Activated CD4-positive, alpha-beta T cell treated with anti-CD3 and anti-CD28 coated beads for 36 hours (primary cell): ENCODE measurements at regions of chr3 and their contacts with region 1.

Region 1: DNA sequence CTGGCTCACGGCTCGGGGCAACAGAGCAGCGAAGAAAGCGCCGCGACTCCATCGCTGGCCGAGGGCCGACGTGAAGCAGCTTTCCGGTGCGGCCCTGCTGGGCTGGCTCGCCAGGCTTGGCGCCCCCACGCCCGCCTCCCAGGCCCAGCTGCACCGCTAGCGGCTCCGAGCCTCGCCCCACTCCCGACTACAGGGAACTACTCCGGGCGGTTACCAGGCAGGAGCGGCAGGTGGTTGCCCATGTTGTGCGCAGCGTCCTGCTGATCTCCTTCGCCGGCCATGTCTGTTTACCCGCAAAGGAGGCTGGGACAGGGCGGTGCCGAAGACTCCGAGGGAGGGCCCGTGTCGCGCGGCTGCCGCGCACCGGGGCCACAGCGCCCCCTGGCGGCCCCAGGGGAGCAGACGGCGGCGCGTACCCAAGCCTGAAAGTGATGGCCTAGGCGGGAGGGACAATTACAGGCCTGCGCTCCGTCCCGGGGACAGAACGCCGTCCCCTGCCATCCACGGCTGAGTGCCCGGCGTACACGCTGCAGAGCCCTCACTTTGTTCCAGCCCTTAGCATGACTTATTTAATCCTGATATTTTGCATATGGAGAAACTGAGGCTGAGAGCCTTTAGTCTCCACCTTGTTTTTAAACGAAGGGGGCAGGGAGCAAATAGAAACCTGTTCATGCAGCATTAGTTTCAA is at the start of gene CRBN:
- DNase-seq: peak; percentile 93
- ATAC-seq: peak; percentile 92
- H3K4me3 Mint-ChIP-seq: peak within 1 kb of the TSS; percentile 87
- H3K27ac Mint-ChIP-seq: peak within 1 kb of the TSS; percentile 95
- H3K4me1 Mint-ChIP-seq: peaks cover 49% of the 10 kb centered on the region
- H3K27me3 Mint-ChIP-seq: no peaks in the 10 kb centered on the region
- total RNA-seq, gene CRBN: 38.4 to 42.6 TPM

Region 2: DNA sequence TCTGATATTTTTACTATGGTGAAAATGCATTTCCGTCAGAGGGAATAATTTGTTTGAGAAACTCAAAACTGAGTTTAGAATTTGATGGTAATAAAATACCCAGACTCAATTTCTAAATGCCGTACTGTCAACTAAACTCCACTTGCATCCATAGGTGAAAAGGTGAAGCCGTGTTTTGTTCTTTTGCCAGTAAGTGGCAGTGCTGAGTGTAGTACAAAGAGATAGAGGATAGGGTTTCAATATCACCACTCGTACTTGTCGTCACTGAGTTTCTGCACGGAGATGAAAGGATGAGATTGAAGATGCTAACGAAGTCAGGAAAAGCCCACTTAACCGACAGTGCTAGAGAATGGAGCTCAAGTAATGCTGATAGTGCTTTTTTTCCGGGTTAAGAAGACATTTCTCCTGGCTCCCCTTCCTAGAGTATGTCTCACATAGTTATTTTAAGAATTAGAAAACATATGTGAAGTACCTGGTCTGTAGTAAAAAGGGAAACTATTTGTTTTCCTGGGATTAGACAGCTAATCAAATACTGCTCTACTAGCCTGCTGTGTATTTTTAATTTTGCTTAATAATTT is 414.5 kb before region 1 on chr3:
- CTCF ChIA-PET with region 1: no interaction called
- POLR2A ChIA-PET with region 1: no interaction called
- intact Hi-C with region 1: loop called in 1 of 2 experiments (anchors 10 kb)
- DNase-seq: peak; percentile 12
- ATAC-seq: peak; percentile 64
- H3K4me3 Mint-ChIP-seq: no peak overlapping the region
- H3K27ac Mint-ChIP-seq: no peak overlapping the region
- H3K4me1 Mint-ChIP-seq: peaks cover 3% of the 10 kb centered on the region
- H3K27me3 Mint-ChIP-seq: peaks cover 10% of the 10 kb centered on the region

Region 3: GRCh38 chr3:3027976-3028567 is 151.5 kb before region 1 on chr3:
- CTCF ChIA-PET with region 1: no interaction called
- POLR2A ChIA-PET with region 1: no interaction called
- intact Hi-C with region 1: loop called (anchors 1 to 10 kb)
- DNase-seq: no peak
- ATAC-seq: peak; percentile 86
- H3K4me3 Mint-ChIP-seq: no peak overlapping the region
- H3K27ac Mint-ChIP-seq: no peak overlapping the region
- H3K4me1 Mint-ChIP-seq: peaks cover 13% of the 10 kb centered on the region
- H3K27me3 Mint-ChIP-seq: peaks cover 2% of the 10 kb centered on the region

Region 4: GRCh38 chr3:3126477-3127431 is 52.8 kb before region 1 on chr3 and contains the start of gene TRNT1:
- CTCF ChIA-PET with region 1: no interaction called
- POLR2A ChIA-PET with region 1: no interaction called
- intact Hi-C with region 1: loop called (anchors 1 to 2 kb)
- DNase-seq: peak; percentile 98
- ATAC-seq: peak; percentile 91
- H3K4me3 Mint-ChIP-seq: peak within 1 kb of the TSS; percentile 99
- H3K27ac Mint-ChIP-seq: peak within 1 kb of the TSS; percentile 99
- H3K4me1 Mint-ChIP-seq: peaks cover 30% of the 10 kb centered on the region
- H3K27me3 Mint-ChIP-seq: no peaks in the 10 kb centered on the region
- total RNA-seq, gene TRNT1: 51.4 to 58.2 TPM

Region 5: DNA sequence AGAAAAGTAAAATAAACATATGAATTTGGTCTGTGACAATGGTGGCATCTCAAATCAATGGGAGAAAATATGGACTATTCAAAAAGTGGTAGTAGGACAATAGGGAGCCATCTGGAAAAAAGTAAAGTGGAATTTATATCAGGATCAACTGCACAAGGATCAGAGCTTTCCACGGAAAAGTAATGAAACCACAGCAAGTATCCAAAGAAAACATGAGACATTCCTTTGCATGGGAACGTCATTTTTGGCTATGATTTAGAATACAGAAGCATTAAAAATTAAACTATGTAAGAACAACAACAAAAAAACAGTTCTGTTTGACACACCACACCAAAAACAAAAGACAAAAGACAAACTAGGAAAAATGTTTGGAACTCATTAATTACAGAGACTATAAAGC is 18.7 kb before region 1 on chr3:
- CTCF ChIA-PET with region 1: no interaction called
- POLR2A ChIA-PET with region 1: no interaction called
- intact Hi-C with region 1: loop called in 1 of 2 experiments (anchors 1 kb)
- DNase-seq: no peak
- ATAC-seq: no peak
- H3K4me3 Mint-ChIP-seq: no peak overlapping the region
- H3K27ac Mint-ChIP-seq: peak overlapping the region; percentile 25
- H3K4me1 Mint-ChIP-seq: peaks cover 49% of the 10 kb centered on the region
- H3K27me3 Mint-ChIP-seq: no peaks in the 10 kb centered on the region

Region 6: DNA sequence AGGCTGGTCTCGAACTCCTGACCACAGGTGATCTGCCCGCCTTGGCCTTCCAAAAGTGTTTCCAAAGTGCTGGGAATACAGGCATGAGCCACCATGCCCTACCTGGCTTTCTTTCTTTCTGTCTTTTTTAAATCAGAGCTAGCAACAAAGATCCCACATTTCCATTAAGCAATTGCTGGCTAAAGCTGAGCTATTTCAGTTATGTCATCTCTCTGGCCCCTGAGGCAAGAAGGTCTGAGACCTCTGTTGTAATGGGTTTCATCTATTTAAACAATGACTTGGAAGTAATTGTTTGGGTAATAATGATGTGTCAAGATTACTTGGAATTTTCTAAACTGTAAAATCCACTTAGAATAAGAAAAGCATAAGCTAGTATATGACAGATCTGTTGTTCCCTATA is 30.2 kb after region 1 on chr3:
- CTCF ChIA-PET with region 1: no interaction called
- POLR2A ChIA-PET with region 1: no interaction called
- intact Hi-C with region 1: no loop called
- DNase-seq: no peak
- ATAC-seq: no peak
- H3K4me3 Mint-ChIP-seq: no peak overlapping the region
- H3K27ac Mint-ChIP-seq: no peak overlapping the region
- H3K4me1 Mint-ChIP-seq: no peaks in the 10 kb centered on the region
- H3K27me3 Mint-ChIP-seq: no peaks in the 10 kb centered on the region

Region 7: GRCh38 chr3:4303187-4304123 is 1123.9 kb after region 1 on chr3 and contains the start of gene SETMAR:
- CTCF ChIA-PET with region 1: no interaction called
- POLR2A ChIA-PET with region 1: no interaction called
- intact Hi-C with region 1: loop called in 1 of 2 experiments (anchors 1 kb)
- DNase-seq: peak; percentile 93
- ATAC-seq: peak; percentile 96
- H3K4me3 Mint-ChIP-seq: peak within 1 kb of the TSS; percentile 79
- H3K27ac Mint-ChIP-seq: peak within 1 kb of the TSS; percentile 96
- H3K4me1 Mint-ChIP-seq: peaks cover 26% of the 10 kb centered on the region
- H3K27me3 Mint-ChIP-seq: no peaks in the 10 kb centered on the region
- total RNA-seq, gene SETMAR: 19.3 to 19.4 TPM